ENCODE measurements at regions of chr12 and their contacts with region 1.

Region 1: GRCh38 chr12:132414634-132415326 is 75.2 kb upstream of the FBRSL1 start:
- DNase-seq: no peak
- ATAC-seq: peak; percentile 99
- H3K4me3 ChIP-seq: no peak overlapping the region
- H3K27ac ChIP-seq: no peak overlapping the region
- H3K4me1 ChIP-seq: peaks cover 3% of the 10 kb centered on the region; the same call in 1 of the 2 replicates
- H3K27me3 ChIP-seq: 0 out of 4 replicates have a peak, but pooled peaks cover 0 to under 1% of the 10 kb centered on the region in 2 experiments
- CTCF ChIP-seq: peak; percentile 82 to 95 (median 89)
- EP300 ChIP-seq: no peak
- POLR2A ChIP-seq: no peak
- RAD21 ChIP-seq: peak; percentile 96

Region 2: GRCh38 chr12:132153501-132154340 is 261.1 kb before region 1 on chr12:
- CTCF ChIA-PET with region 1: interaction called, 9 read pairs
- POLR2A ChIA-PET with region 1: no interaction called
- RAD21 ChIA-PET with region 1: interaction called, 5 read pairs
- SMC1A ChIA-PET with region 1: interaction called, 3 read pairs
- in situ Hi-C with region 1: no loop called
- intact Hi-C with region 1: loop called (anchors 2 kb)
- DNase-seq: peak; percentile 8
- ATAC-seq: peak; percentile 99
- H3K4me3 ChIP-seq: no peak overlapping the region
- H3K27ac ChIP-seq: no peak overlapping the region
- H3K4me1 ChIP-seq: no peaks in the 10 kb centered on the region
- H3K27me3 ChIP-seq: no peaks in the 10 kb centered on the region
- CTCF ChIP-seq: peak; percentile 93 to 97 (median 95); a peak in 5 of 6 replicates
- EP300 ChIP-seq: no peak
- POLR2A ChIP-seq: peak; percentile 51
- RAD21 ChIP-seq: peak; percentile 86

Region 3: GRCh38 chr12:132513070-132513398 is 98.3 kb after region 1 on chr12:
- CTCF ChIA-PET with region 1: interaction called, 4 read pairs
- POLR2A ChIA-PET with region 1: no interaction called
- RAD21 ChIA-PET with region 1: no interaction called
- SMC1A ChIA-PET with region 1: no interaction called
- in situ Hi-C with region 1: loop called (anchors 5 kb)
- intact Hi-C with region 1: no loop called
- DNase-seq: no peak
- ATAC-seq: no peak
- H3K4me3 ChIP-seq: no peak overlapping the region
- H3K27ac ChIP-seq: no peak overlapping the region
- H3K4me1 ChIP-seq: no peaks in the 10 kb centered on the region
- H3K27me3 ChIP-seq: no peaks in the 10 kb centered on the region; a peak in 1 of 4 replicates
- CTCF ChIP-seq: no peak
- EP300 ChIP-seq: no peak
- POLR2A ChIP-seq: no peak
- RAD21 ChIP-seq: no peak

Region 4: DNA sequence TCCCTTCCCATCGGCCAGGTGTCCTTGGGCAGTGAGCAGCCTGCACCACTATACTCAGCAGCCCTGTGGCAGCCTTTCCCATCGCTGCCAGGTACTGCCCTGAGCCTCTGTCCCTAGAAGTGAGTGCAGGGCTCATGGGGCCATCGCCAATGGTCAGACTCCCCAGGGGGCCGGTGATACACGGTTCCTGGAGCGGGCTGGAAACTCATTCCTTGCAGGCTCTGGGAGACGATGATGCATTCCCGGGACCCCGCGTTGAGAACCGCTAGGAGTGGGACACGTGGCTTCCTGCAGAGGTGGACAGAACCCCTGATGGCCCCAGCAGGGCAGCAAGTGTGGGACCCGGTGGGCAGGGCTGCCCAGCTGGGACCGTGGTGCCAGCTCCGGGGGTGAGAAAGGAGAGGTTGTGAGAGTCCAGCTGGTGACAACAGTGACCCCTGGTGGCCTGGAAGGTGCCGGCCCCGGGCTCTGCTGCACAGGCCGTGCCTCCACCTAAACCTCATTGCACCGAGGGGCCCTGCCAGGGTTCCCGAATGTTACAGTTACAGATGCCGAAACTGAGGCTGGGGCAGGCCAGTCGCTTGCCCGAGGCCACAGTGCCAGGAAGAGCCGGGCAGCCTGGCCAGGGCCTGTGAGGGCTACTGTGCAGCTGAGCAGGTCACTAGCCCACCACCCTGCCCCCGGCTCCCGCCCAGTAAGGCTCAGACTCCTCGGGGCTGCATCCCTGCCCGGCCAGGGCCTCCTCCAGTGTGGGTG is 109.0 kb after region 1 on chr12:
- CTCF ChIA-PET with region 1: interaction called, 44 read pairs
- POLR2A ChIA-PET with region 1: no interaction called
- RAD21 ChIA-PET with region 1: interaction called, 23 read pairs
- SMC1A ChIA-PET with region 1: interaction called, 5 read pairs
- in situ Hi-C with region 1: no loop called
- intact Hi-C with region 1: loop called (anchors 1 kb)
- DNase-seq: no peak
- ATAC-seq: peak; percentile 92
- H3K4me3 ChIP-seq: no peak overlapping the region
- H3K27ac ChIP-seq: no peak overlapping the region
- H3K4me1 ChIP-seq: no peaks in the 10 kb centered on the region; the same call in 1 of the 2 replicates
- H3K27me3 ChIP-seq: no peaks in the 10 kb centered on the region
- CTCF ChIP-seq: peak; percentile 83 to 87 (median 86)
- EP300 ChIP-seq: no peak
- POLR2A ChIP-seq: no peak
- RAD21 ChIP-seq: peak; percentile 67

Region 5: GRCh38 chr12:132560614-132561426 is 146.0 kb after region 1 on chr12:
- CTCF ChIA-PET with region 1: interaction called, 19 read pairs
- POLR2A ChIA-PET with region 1: no interaction called
- RAD21 ChIA-PET with region 1: interaction called, 16 read pairs
- SMC1A ChIA-PET with region 1: interaction called, 8 read pairs
- in situ Hi-C with region 1: loop called (anchors 5 kb)
- intact Hi-C with region 1: loop called (anchors 1 kb)
- DNase-seq: peak; percentile 12
- ATAC-seq: peak; percentile 83
- H3K4me3 ChIP-seq: peak overlapping the region; percentile 67
- H3K27ac ChIP-seq: no peak overlapping the region
- H3K4me1 ChIP-seq: peaks cover 6% of the 10 kb centered on the region; the same call in 1 of the 2 replicates
- H3K27me3 ChIP-seq: no peaks in the 10 kb centered on the region; a peak in 1 of 4 replicates
- CTCF ChIP-seq: peak; percentile 64 to 87 (median 82)
- EP300 ChIP-seq: no peak
- POLR2A ChIP-seq: no peak; the same call in 1 of the 2 replicates
- RAD21 ChIP-seq: peak; percentile 58

Region 6: DNA sequence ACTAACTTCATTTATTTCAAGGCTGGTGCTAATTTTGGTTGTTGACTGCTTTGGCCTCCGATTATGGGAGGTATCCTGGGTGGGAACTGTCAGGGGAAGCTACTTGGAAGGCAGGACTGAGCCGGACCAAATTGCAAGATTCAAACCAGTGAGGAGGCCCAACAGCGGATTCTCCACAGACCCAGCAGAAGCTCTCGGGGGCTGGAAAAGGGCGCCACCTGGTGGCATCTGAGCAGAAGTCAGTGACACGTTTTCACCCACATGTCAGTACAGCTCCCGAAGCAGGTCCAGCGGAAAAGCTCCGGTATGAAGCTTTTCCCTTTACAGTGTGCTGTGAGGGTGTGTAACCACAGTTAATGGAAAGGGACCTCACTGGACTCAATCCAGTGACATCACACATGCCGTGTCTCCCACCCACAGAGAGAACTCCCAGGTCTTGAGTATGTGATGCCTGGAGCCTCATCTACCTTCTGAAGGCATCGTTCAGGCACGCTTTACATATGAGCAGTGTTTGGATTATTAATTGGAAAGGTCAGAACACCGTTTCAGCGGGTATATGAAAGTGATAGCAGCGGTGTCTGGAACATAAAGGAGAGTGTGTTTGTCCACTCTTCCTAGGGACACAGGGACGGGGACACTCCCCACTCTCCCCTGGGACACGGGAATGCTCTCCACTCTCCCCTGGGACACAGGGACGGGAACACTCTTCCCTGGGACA is 200.2 kb after region 1 on chr12:
- CTCF ChIA-PET with region 1: interaction called, 37 read pairs
- POLR2A ChIA-PET with region 1: no interaction called
- RAD21 ChIA-PET with region 1: interaction called, 22 read pairs
- SMC1A ChIA-PET with region 1: interaction called, 4 read pairs
- in situ Hi-C with region 1: loop called (anchors 5 kb)
- intact Hi-C with region 1: loop called (anchors 1 kb)
- DNase-seq: peak; percentile 26
- ATAC-seq: peak; percentile 97
- H3K4me3 ChIP-seq: no peak overlapping the region
- H3K27ac ChIP-seq: no peak overlapping the region
- H3K4me1 ChIP-seq: no peaks in the 10 kb centered on the region
- H3K27me3 ChIP-seq: peaks cover 0 to under 1% of the 10 kb centered on the region in 2 experiments; a peak in 1 of 4 replicates
- CTCF ChIP-seq: peak; percentile 84 to 88 (median 88)
- EP300 ChIP-seq: no peak
- POLR2A ChIP-seq: no peak
- RAD21 ChIP-seq: peak; percentile 82

Measured in GM12878 (cell line).